CD4-positive, alpha-beta memory T cell (primary cell): ENCODE measurements at regions of chr2 and their contacts with region 1.

Region 1: DNA sequence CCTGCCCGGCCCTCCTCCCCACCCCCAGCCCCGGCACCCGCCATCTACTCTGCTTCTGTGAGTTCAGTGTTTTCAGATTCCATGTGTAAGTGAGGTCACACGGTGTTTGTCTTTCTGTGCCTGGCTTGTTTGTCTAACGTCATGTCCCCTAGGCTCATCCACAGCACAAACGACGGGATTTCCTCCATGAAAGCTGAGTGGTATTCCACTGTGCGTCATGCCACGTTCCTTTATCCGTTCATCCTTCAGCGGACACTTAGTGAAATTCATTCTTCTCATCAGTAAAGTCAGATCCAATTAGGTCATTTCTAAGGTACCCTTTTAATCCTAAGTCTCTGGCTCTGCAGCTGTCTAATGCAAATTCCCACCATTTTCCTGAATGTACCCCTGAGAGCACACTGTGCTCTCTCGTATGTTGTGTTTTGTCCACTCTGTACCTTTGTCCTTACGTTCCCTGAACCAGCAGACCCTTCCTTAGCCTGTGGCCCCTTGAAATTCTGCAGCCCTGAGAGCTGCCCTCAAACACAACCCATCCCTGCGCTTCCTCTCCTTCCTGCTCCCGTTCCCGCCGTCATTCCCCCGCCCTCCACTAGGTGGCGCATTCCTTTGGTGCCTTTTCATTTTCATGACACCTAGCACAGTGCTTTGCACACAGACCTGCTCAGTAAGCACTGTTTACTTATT is 44.1 kb downstream of the TRAPPC12 start:
- DNase-seq: peak; percentile 50 to 63 (median 57)
- H3K4me3 ChIP-seq: no peak overlapping the region
- H3K4me3 Mint-ChIP-seq: no peak overlapping the region
- H3K27ac ChIP-seq: no peak overlapping the region
- H3K27ac Mint-ChIP-seq: peak overlapping the region in 6 of 7 donors; percentile 9 to 90 (median 34)
- H3K4me1 ChIP-seq: no peaks in the 10 kb centered on the region
- H3K4me1 Mint-ChIP-seq: peaks cover 3 to 6% (median 5%) of the 10 kb centered on the region in 4 donors
- H3K27me3 ChIP-seq: no peaks in the 10 kb centered on the region
- H3K27me3 Mint-ChIP-seq: no peaks in the 10 kb centered on the region

Region 2: GRCh38 chr2:3386448-3386958 is 37.1 kb before region 1 on chr2:
- CTCF ChIA-PET with region 1: interaction called, 22 read pairs
- POLR2A ChIA-PET with region 1: no interaction called
- intact Hi-C with region 1: no loop called
- DNase-seq: no peak
- H3K4me3 ChIP-seq: no peak overlapping the region
- H3K4me3 Mint-ChIP-seq: no peak overlapping the region
- H3K27ac ChIP-seq: no peak overlapping the region
- H3K27ac Mint-ChIP-seq: peak overlapping the region in 1 of 7 donors; percentile 17
- H3K4me1 ChIP-seq: peaks cover 3% of the 10 kb centered on the region
- H3K4me1 Mint-ChIP-seq: peaks cover 11 to 40% (median 15%) of the 10 kb centered on the region in 4 donors
- H3K27me3 ChIP-seq: no peaks in the 10 kb centered on the region
- H3K27me3 Mint-ChIP-seq: no peaks in the 10 kb centered on the region

Region 3: DNA sequence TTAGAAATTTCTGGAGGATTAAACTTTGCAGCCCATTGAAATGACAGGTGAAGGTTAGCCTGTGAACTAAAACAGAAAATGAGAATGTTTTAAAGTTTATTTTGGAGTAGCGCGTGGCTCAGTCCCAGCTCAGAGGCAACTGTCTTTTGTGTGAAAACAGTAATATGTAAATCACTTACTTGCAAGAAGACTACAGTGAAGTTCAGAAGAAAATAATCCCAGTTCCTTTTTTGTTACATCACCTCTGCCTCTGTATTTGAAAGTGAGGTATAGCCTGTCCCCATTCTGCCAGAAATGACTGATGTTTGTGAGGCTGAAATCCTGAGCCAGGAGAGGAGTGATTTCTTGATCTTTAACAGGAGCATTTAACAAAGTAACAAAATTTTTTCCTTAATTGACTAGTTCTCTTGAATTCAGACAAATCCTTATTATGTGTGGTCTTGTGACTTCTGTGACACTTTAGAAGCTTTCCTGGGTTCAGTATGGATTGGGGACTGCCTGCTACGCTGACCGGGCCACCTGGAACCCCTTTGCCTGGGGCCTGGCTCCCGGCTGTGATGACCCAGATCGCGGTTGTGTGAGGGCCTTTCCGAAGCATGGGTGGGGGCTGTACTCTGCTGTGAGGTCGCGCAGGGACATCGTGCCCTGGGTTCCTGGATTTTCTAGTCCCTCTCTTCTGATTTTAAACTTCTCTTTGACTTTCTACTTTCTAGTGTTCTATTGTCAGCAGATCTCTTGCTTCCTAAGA is 19.9 kb before region 1 on chr2:
- CTCF ChIA-PET with region 1: interaction called, 43 read pairs
- POLR2A ChIA-PET with region 1: no interaction called
- intact Hi-C with region 1: no loop called
- DNase-seq: no peak
- H3K4me3 ChIP-seq: no peak overlapping the region
- H3K4me3 Mint-ChIP-seq: no peak overlapping the region
- H3K27ac ChIP-seq: no peak overlapping the region
- H3K27ac Mint-ChIP-seq: peak overlapping the region in 1 of 7 donors; percentile 37
- H3K4me1 ChIP-seq: no peaks in the 10 kb centered on the region
- H3K4me1 Mint-ChIP-seq: peaks cover 12 to 43% (median 15%) of the 10 kb centered on the region in 4 donors
- H3K27me3 ChIP-seq: no peaks in the 10 kb centered on the region
- H3K27me3 Mint-ChIP-seq: no peaks in the 10 kb centered on the region

Region 4: DNA sequence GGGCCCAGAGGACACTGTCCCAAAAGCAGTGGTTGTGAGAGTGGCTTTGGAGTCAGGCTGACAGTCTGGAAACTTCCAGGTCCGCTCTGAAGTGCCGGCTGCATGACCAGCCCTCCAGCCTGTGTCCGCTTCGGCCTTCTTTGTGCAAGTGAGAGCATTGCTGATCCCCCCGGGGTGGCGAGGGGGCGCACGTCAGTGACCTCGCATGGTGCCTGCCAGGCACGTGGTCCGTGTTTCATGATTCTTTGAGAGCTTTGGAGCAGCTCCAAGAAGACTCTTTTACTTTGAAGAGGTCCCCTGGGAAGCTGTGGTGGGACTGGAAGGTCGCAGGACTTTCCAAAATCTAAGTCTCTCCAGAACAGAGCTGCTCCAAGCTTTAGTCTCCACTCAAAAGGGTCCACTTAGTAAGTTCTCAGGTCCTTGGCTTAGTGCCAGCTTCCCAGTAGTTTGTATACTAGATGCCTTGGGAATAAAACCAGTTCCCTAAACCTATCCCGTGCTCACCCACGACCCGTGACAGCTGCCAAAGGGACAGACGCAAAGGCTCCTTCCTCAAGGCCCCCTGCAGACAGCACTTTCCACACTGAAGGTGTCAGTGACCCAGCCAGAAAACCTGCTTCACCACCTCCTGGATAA is 26.9 kb after region 1 on chr2:
- CTCF ChIA-PET with region 1: interaction called, 11 read pairs
- POLR2A ChIA-PET with region 1: no interaction called
- intact Hi-C with region 1: no loop called
- DNase-seq: no peak
- H3K4me3 ChIP-seq: no peak overlapping the region
- H3K4me3 Mint-ChIP-seq: no peak overlapping the region
- H3K27ac ChIP-seq: no peak overlapping the region
- H3K27ac Mint-ChIP-seq: peak overlapping the region in 1 of 7 donors; percentile 65
- H3K4me1 ChIP-seq: no peaks in the 10 kb centered on the region
- H3K4me1 Mint-ChIP-seq: peaks cover 0 to 3% (median 0%) of the 10 kb centered on the region in 4 donors
- H3K27me3 ChIP-seq: no peaks in the 10 kb centered on the region
- H3K27me3 Mint-ChIP-seq: no peaks in the 10 kb centered on the region